CD4-positive, alpha-beta T cell (primary cell): ENCODE measurements at regions of chr6 and their contacts with region 1.

Region 1: GRCh38 chr6:33570806-33571636 is 9.1 kb downstream of the BAK1 start:
- DNase-seq: peak; percentile 83 to 97 (median 88)
- ATAC-seq: peak; percentile 84
- H3K4me3 ChIP-seq: peak overlapping the region; percentile 64
- H3K4me3 Mint-ChIP-seq: peak overlapping the region; percentile 88
- H3K27ac ChIP-seq: peak overlapping the region; percentile 93 to 97
- H3K27ac Mint-ChIP-seq: peak overlapping the region; percentile 99
- H3K4me1 ChIP-seq: peaks cover 42% of the 10 kb centered on the region
- H3K4me1 Mint-ChIP-seq: peaks cover 35% of the 10 kb centered on the region
- H3K27me3 ChIP-seq: no peaks in the 10 kb centered on the region
- H3K27me3 Mint-ChIP-seq: no peaks in the 10 kb centered on the region
- CTCF ChIP-seq: no peak

Region 2: GRCh38 chr6:33344701-33345697 is 226.0 kb before region 1 on chr6:
- CTCF ChIA-PET with region 1: no interaction called
- POLR2A ChIA-PET with region 1: interaction called, 5 read pairs
- intact Hi-C with region 1: loop called in 1 of 2 experiments (anchors 1 kb)
- DNase-seq: peak; percentile 53 to 93 (median 62)
- ATAC-seq: peak; percentile 52
- H3K4me3 ChIP-seq: peak overlapping the region; percentile 24
- H3K4me3 Mint-ChIP-seq: peak overlapping the region; percentile 90
- H3K27ac ChIP-seq: peak overlapping the region; percentile 79 to 88
- H3K27ac Mint-ChIP-seq: peak overlapping the region; percentile 98
- H3K4me1 ChIP-seq: peaks cover 49% of the 10 kb centered on the region
- H3K4me1 Mint-ChIP-seq: peaks cover 38% of the 10 kb centered on the region
- H3K27me3 ChIP-seq: no peaks in the 10 kb centered on the region
- H3K27me3 Mint-ChIP-seq: no peaks in the 10 kb centered on the region
- CTCF ChIP-seq: peak; percentile 64

Region 3: GRCh38 chr6:33417903-33418689 is 152.9 kb before region 1 on chr6 and contains the start of gene CUTA:
- CTCF ChIA-PET with region 1: no interaction called
- POLR2A ChIA-PET with region 1: interaction called, 22 read pairs
- intact Hi-C with region 1: no loop called
- DNase-seq: peak; percentile 97 to 100 (median 98)
- ATAC-seq: peak; percentile 85
- H3K4me3 ChIP-seq: peak within 1 kb of the TSS; percentile 82
- H3K4me3 Mint-ChIP-seq: peak within 1 kb of the TSS; percentile 92
- H3K27ac ChIP-seq: peak within 1 kb of the TSS; percentile 97 to 99
- H3K27ac Mint-ChIP-seq: peak within 1 kb of the TSS; percentile 98
- H3K4me1 ChIP-seq: peaks cover 77% of the 10 kb centered on the region
- H3K4me1 Mint-ChIP-seq: peaks cover 79% of the 10 kb centered on the region
- H3K27me3 ChIP-seq: no peaks in the 10 kb centered on the region
- H3K27me3 Mint-ChIP-seq: no peaks in the 10 kb centered on the region
- CTCF ChIP-seq: peak; percentile 30
- total RNA-seq, gene CUTA: 176 to 185 TPM

Region 4: GRCh38 chr6:33430991-33431879 is 139.8 kb before region 1 on chr6:
- CTCF ChIA-PET with region 1: no interaction called
- POLR2A ChIA-PET with region 1: interaction called, 25 read pairs
- intact Hi-C with region 1: loop called (anchors 5 kb)
- DNase-seq: peak; percentile 74 to 92 (median 85)
- ATAC-seq: peak; percentile 66
- H3K4me3 ChIP-seq: peak overlapping the region; percentile 71
- H3K4me3 Mint-ChIP-seq: peak overlapping the region; percentile 93
- H3K27ac ChIP-seq: peak overlapping the region; percentile 52 to 64
- H3K27ac Mint-ChIP-seq: peak overlapping the region; percentile 92
- H3K4me1 ChIP-seq: peaks cover 63% of the 10 kb centered on the region
- H3K4me1 Mint-ChIP-seq: peaks cover 65% of the 10 kb centered on the region
- H3K27me3 ChIP-seq: no peaks in the 10 kb centered on the region
- H3K27me3 Mint-ChIP-seq: no peaks in the 10 kb centered on the region
- CTCF ChIP-seq: no peak

Region 5: DNA sequence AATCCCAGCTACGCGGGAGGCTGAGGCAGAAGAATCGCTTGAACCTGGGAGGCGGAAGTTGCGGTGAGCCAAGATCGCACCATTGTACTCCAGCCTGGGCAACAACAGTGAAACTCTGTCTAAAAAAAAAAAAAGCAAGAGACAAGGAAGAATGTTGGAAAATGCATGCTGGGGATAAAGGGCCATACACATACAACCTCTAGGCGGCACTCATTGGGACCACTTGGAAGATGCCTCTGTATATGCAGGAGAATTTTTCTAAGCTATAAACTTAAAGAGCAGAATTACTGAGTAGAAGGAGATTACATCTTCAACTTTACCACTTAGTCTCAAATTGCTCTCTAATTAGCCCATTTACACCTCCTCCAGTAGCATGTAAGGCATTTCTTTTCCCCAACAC is 73.9 kb before region 1 on chr6:
- CTCF ChIA-PET with region 1: no interaction called
- POLR2A ChIA-PET with region 1: no interaction called
- intact Hi-C with region 1: no loop called
- DNase-seq: no peak
- ATAC-seq: no peak
- H3K4me3 ChIP-seq: no peak overlapping the region
- H3K4me3 Mint-ChIP-seq: no peak overlapping the region
- H3K27ac ChIP-seq: no peak overlapping the region
- H3K27ac Mint-ChIP-seq: no peak overlapping the region
- H3K4me1 ChIP-seq: no peaks in the 10 kb centered on the region
- H3K4me1 Mint-ChIP-seq: no peaks in the 10 kb centered on the region
- H3K27me3 ChIP-seq: peaks cover 0 to 2% of the 10 kb centered on the region in 2 experiments
- H3K27me3 Mint-ChIP-seq: no peaks in the 10 kb centered on the region
- CTCF ChIP-seq: no peak

Region 6: DNA sequence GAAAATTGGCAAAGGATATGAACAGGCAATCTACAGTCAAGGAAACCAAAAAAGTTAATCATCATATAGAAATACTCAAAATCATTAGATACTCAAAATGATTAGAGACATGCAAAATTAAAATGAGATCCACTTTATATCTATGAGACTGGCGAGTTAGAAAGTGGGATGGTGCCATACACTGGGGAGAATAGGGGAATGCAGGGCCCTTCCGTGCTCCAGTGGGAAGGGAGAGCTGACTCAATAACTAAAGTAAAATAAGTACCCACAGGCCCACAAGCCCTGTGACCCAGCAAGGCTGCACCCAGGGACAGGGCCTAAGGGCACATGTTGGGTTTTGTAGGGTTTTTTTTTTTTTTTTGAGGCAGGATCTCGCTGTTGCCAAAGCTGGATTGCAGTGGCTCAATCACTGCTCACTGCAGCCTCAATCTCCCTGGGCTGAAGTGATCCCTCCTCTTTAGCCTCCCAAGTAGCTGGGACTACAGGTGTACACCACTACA is 35.9 kb before region 1 on chr6:
- CTCF ChIA-PET with region 1: interaction called, 3 read pairs
- POLR2A ChIA-PET with region 1: interaction called, 27 read pairs
- intact Hi-C with region 1: loop called (anchors 1 to 2 kb)
- DNase-seq: no peak
- ATAC-seq: no peak
- H3K4me3 ChIP-seq: no peak overlapping the region
- H3K4me3 Mint-ChIP-seq: no peak overlapping the region
- H3K27ac ChIP-seq: no peak overlapping the region
- H3K27ac Mint-ChIP-seq: peak overlapping the region; percentile 18
- H3K4me1 ChIP-seq: peaks cover 17% of the 10 kb centered on the region
- H3K4me1 Mint-ChIP-seq: peaks cover 18% of the 10 kb centered on the region
- H3K27me3 ChIP-seq: no peaks in the 10 kb centered on the region
- H3K27me3 Mint-ChIP-seq: no peaks in the 10 kb centered on the region
- CTCF ChIP-seq: no peak

Region 7: DNA sequence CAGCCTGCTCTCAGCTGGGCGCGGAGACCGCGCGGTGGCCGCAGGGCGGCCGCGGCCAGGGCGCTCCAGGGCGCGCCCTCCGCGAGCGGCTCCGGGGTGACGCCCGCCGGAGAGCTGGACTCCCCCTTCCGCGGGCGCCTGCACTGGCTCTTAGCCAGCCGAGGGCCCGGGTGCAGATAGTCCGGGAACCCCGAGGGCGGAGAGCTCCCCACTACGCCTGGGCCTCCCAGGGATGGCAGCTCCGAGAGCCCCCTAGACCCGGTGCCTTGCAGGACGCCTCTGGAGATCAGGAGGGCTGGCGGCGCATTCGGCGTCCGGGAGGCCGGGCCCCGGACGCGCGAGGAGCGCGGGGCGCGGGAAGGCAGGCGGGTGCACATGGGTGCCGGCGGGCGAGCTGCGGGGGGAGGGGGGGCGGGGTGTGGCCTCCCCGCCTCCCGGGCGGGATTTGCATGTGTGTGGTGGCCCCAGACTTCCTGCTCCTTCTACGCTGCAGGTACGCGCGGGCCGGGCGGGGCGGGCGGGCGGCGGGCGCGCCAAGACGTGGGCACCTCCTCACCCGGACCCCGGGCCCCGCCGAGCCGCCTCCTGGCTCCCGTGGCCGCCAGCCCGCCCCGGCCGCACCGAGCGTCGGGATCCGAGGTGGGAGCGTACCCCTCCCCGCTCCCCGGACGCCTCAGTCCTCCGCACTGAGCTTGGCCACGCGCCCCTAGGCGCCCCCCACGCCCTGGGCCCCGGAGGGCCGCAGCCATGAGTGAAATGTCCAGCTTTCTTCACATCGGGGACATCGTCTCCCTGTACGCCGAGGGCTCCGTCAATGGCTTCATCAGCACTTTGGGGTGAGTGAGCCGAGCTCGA is 50.1 kb after region 1 on chr6 and contains the start of gene ITPR3:
- CTCF ChIA-PET with region 1: no interaction called
- POLR2A ChIA-PET with region 1: interaction called, 13 read pairs
- intact Hi-C with region 1: no loop called
- DNase-seq: peak; percentile 61 to 93 (median 74)
- ATAC-seq: peak; percentile 88
- H3K4me3 ChIP-seq: peak within 1 kb of the TSS; percentile 99
- H3K4me3 Mint-ChIP-seq: peak within 1 kb of the TSS; percentile 95
- H3K27ac ChIP-seq: peak within 1 kb of the TSS; percentile 76 to 82
- H3K27ac Mint-ChIP-seq: peak within 1 kb of the TSS; percentile 93
- H3K4me1 ChIP-seq: peaks cover 60% of the 10 kb centered on the region
- H3K4me1 Mint-ChIP-seq: peaks cover 42% of the 10 kb centered on the region
- H3K27me3 ChIP-seq: no peaks in the 10 kb centered on the region
- H3K27me3 Mint-ChIP-seq: no peaks in the 10 kb centered on the region
- CTCF ChIP-seq: no peak
- total RNA-seq, gene ITPR3: 44.5 to 45.5 TPM

Region 8: DNA sequence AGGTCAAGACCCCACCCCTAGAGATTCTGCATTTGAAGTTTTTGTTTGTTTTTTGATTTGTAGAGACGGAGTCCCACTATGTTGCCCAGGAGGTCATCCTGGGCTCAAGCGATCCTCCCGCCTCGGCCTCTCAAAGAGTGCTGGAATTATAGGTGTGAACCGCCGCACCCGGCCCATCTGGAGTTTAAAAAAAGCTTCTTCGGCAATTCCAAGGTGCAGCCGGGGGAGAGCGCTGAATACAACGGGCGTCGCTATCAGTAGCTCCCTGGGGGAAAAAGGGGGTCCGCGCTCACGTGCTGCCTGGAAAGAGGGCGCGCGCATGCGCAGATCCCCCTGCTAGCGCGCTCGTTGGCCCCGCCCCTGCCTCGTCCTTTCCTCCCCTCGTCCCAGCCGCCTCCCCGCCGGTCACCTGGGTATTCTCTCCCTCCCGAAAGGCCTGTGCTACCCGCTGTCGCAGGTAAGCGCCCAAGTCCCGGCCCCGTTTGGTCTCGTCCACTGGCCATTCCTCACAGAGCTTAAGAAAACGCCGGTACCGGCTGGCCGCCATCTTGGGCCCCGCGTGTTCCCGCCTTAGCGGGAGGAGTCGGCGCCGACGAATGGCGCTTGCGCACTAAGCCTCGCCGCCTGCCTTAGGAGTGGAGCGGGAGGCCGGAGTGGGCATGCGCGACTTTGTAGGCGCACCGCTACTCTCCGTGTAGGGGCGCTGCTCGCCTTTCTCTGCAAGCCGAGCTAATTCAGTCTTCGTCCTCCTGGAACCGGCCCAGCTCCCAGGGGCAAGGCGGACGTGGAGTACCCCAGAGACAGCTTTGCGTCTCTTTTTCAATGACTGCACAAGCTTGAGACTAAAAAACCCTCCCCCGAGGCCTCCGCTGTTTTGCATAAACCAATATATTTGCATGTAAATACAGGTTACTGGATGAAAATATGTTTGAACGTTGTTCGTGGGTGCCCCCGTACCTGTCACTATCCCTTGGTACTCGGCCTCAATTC is 140.4 kb after region 1 on chr6 and contains the start of gene UQCC2:
- CTCF ChIA-PET with region 1: no interaction called
- POLR2A ChIA-PET with region 1: interaction called, 11 read pairs
- intact Hi-C with region 1: no loop called
- DNase-seq: peak; percentile 93 to 99 (median 97)
- ATAC-seq: peak; percentile 97
- H3K4me3 ChIP-seq: peak within 1 kb of the TSS; percentile 72
- H3K4me3 Mint-ChIP-seq: peak within 1 kb of the TSS; percentile 100
- H3K27ac ChIP-seq: peak within 1 kb of the TSS; percentile 84 to 90
- H3K27ac Mint-ChIP-seq: peak within 1 kb of the TSS; percentile 97
- H3K4me1 ChIP-seq: peaks cover 27% of the 10 kb centered on the region
- H3K4me1 Mint-ChIP-seq: peaks cover 31% of the 10 kb centered on the region
- H3K27me3 ChIP-seq: no peaks in the 10 kb centered on the region
- H3K27me3 Mint-ChIP-seq: no peaks in the 10 kb centered on the region
- CTCF ChIP-seq: peak; percentile 80
- total RNA-seq, gene UQCC2: 8.7 to 9.3 TPM

Region 9: DNA sequence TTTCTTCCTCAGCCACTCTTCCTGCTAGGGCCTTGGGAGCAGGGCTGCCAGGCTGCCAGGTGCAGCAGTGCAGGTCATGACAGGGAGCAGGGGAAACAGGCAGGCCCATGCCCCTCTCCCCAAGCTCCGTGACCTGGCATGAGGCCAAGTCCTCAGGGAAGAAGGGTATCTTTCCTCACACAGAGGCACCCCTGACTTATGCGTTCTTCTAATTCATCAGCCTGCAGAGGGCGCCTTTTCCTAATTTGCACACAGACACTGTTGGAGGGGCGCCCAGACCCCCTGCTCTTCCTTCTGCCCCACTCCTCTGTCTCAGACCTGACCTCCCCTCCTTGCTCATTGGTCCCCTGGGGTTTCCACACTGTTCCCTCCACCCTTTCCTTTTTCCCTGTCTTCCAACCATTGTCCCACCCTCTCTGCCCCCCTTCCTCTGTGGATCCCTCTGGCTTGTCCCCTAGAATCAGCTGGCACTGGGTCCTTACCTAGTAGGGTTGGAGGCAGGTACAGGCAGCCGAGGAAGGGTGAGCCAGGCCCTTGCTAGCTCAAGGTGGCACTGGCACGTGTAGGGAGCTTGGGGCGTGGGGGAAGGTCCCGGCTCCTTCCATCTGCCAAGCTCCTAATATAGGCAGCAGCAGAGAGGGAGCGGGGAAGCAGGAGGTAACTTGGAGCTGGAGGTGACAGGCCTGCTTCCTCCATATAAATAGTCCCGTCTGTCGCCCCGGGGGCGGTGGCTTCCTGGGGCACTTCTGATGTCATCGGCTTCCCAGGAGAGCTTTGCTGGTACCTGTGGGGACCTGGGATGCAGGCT is 387.7 kb after region 1 on chr6:
- CTCF ChIA-PET with region 1: no interaction called
- POLR2A ChIA-PET with region 1: no interaction called
- intact Hi-C with region 1: no loop called
- DNase-seq: peak in 2 of 14 experiments; percentile 17 to 19
- ATAC-seq: no peak
- H3K4me3 ChIP-seq: no peak overlapping the region
- H3K4me3 Mint-ChIP-seq: no peak overlapping the region
- H3K27ac ChIP-seq: no peak overlapping the region
- H3K27ac Mint-ChIP-seq: no peak overlapping the region
- H3K4me1 ChIP-seq: no peaks in the 10 kb centered on the region
- H3K4me1 Mint-ChIP-seq: peaks cover 5% of the 10 kb centered on the region
- H3K27me3 ChIP-seq: peaks cover 0 to 6% of the 10 kb centered on the region in 2 experiments
- H3K27me3 Mint-ChIP-seq: no peaks in the 10 kb centered on the region
- CTCF ChIP-seq: peak; percentile 18

Region 10: GRCh38 chr6:34358389-34358905 is 787.4 kb after region 1 on chr6:
- CTCF ChIA-PET with region 1: no interaction called
- POLR2A ChIA-PET with region 1: no interaction called
- intact Hi-C with region 1: no loop called
- DNase-seq: no peak
- ATAC-seq: no peak
- H3K4me3 ChIP-seq: no peak overlapping the region
- H3K4me3 Mint-ChIP-seq: no peak overlapping the region
- H3K27ac ChIP-seq: no peak overlapping the region
- H3K27ac Mint-ChIP-seq: no peak overlapping the region
- H3K4me1 ChIP-seq: peaks cover 4% of the 10 kb centered on the region
- H3K4me1 Mint-ChIP-seq: peaks cover 34% of the 10 kb centered on the region
- H3K27me3 ChIP-seq: no peaks in the 10 kb centered on the region
- H3K27me3 Mint-ChIP-seq: no peaks in the 10 kb centered on the region
- CTCF ChIP-seq: no peak